Activated CD4-positive, alpha-beta T cell treated with anti-CD3 and anti-CD28 coated beads, Interleukin-2, amount 10 ng/mL, durations not matched to agents 24 days and 14 days (primary cell): ENCODE measurements at regions of chr10 and their contacts with region 1.

Region 1: GRCh38 chr10:28381903-28382347 is 79.1 kb upstream of the MPP7 start:
- DNase-seq: peak; percentile 94
- H3K4me3 Mint-ChIP-seq: no peak overlapping the region
- H3K27ac Mint-ChIP-seq: peak overlapping the region; percentile 36
- H3K4me1 Mint-ChIP-seq: peaks cover 25% of the 10 kb centered on the region
- H3K27me3 Mint-ChIP-seq: peaks cover 12% of the 10 kb centered on the region

Region 2: DNA sequence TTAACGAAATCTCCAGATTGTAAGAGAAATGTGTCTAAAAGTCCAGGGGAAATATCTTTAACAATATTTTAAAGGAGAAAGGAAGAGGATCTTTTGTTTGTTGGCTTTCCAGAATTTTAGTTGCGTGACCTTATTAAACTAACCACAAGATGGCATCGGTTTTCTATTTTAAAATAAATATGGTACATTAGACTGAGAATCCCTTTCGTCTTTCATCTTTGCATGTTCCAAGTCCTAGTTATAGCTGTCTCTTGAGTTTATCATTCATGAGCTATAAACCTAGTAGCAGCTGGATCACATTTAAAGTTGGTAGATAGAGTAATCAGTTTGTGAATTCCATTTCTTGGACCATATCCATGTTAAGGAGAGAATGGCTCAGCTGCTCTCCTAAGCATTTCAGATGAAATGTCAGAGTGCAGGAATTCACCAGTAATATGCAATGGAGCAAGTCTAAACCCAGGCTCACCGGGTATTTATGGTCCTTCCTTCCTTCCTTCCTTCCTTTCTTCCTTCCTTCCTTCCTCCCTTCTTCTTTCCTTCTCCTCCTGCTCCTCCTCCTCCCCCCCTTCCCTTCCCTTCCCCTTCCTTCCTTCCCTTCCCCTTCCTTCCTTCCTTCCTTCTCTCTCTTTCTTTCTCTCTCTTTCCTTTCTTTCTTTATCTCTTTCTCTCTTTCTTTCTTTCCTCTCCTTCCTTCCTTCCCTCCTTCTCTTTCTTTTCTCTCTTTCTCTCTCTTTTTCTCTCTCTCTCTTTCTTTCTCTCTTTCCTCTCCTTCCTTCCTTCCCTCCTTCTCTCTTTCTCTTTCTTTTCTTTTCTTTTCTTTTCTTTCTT is 935.6 kb before region 1 on chr10:
- intact Hi-C with region 1: loop called (anchors 10 kb)
- DNase-seq: no peak
- H3K4me3 Mint-ChIP-seq: no peak overlapping the region
- H3K27ac Mint-ChIP-seq: no peak overlapping the region
- H3K4me1 Mint-ChIP-seq: peaks cover 8% of the 10 kb centered on the region
- H3K27me3 Mint-ChIP-seq: peaks cover 14% of the 10 kb centered on the region

Region 3: GRCh38 chr10:28179006-28179742 is 202.8 kb before region 1 on chr10:
- intact Hi-C with region 1: loop called (anchors 5 kb)
- DNase-seq: peak; percentile 85
- H3K4me3 Mint-ChIP-seq: peak overlapping the region; percentile 76
- H3K27ac Mint-ChIP-seq: peak overlapping the region; percentile 85
- H3K4me1 Mint-ChIP-seq: peaks cover 23% of the 10 kb centered on the region
- H3K27me3 Mint-ChIP-seq: peaks cover 8% of the 10 kb centered on the region

Region 4: GRCh38 chr10:28250782-28251181 is 131.1 kb before region 1 on chr10:
- intact Hi-C with region 1: loop called (anchors 1 kb)
- DNase-seq: peak; percentile 41
- H3K4me3 Mint-ChIP-seq: no peak overlapping the region
- H3K27ac Mint-ChIP-seq: no peak overlapping the region
- H3K4me1 Mint-ChIP-seq: peaks cover 4% of the 10 kb centered on the region
- H3K27me3 Mint-ChIP-seq: peaks cover 4% of the 10 kb centered on the region

Region 5: GRCh38 chr10:28263136-28263820 is 118.6 kb before region 1 on chr10:
- intact Hi-C with region 1: no loop called
- DNase-seq: no peak
- H3K4me3 Mint-ChIP-seq: no peak overlapping the region
- H3K27ac Mint-ChIP-seq: no peak overlapping the region
- H3K4me1 Mint-ChIP-seq: peaks cover 7% of the 10 kb centered on the region
- H3K27me3 Mint-ChIP-seq: no peaks in the 10 kb centered on the region

Region 6: GRCh38 chr10:28302638-28303488 is 79.1 kb before region 1 on chr10 and contains the start of gene MPP7:
- intact Hi-C with region 1: loop called (anchors 1 kb)
- DNase-seq: peak; percentile 99
- H3K4me3 Mint-ChIP-seq: peak within 1 kb of the TSS; percentile 96
- H3K27ac Mint-ChIP-seq: peak within 1 kb of the TSS; percentile 82
- H3K4me1 Mint-ChIP-seq: peaks cover 29% of the 10 kb centered on the region
- H3K27me3 Mint-ChIP-seq: peaks cover 45% of the 10 kb centered on the region
- total RNA-seq, gene MPP7: 0.43 and 0.54 TPM in 2 replicates

Region 7: DNA sequence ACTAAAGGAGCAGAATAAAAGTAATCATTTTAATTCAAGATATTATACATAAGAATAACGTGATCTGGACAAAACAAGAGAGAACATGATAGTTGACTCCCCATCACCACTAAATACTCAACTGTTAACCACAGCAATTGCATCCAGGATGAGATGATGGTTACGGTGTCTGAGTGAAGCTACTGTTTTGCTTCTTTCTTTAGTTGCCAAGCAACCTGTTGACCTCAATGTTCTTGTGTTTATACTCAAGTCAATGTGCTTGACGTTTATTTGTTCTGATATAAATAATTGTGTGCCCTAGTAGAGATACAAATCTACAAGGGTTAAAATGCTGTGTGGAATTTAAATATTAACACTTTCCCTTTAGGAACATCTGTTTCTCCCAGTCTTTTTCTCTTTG is 47.6 kb before region 1 on chr10:
- intact Hi-C with region 1: loop called (anchors 1 kb)
- DNase-seq: peak; percentile 92
- H3K4me3 Mint-ChIP-seq: peak overlapping the region; percentile 91
- H3K27ac Mint-ChIP-seq: peak overlapping the region; percentile 100
- H3K4me1 Mint-ChIP-seq: peaks cover 46% of the 10 kb centered on the region
- H3K27me3 Mint-ChIP-seq: peaks cover 9% of the 10 kb centered on the region

Region 8: GRCh38 chr10:28367929-28368484 is 13.9 kb before region 1 on chr10:
- intact Hi-C with region 1: loop called (anchors 1 kb)
- DNase-seq: peak; percentile 91
- H3K4me3 Mint-ChIP-seq: peak overlapping the region; percentile 59
- H3K27ac Mint-ChIP-seq: peak overlapping the region; percentile 80
- H3K4me1 Mint-ChIP-seq: peaks cover 32% of the 10 kb centered on the region
- H3K27me3 Mint-ChIP-seq: no peaks in the 10 kb centered on the region

Region 9: GRCh38 chr10:29285624-29286051 is 903.7 kb after region 1 on chr10:
- intact Hi-C with region 1: no loop called
- DNase-seq: no peak
- H3K4me3 Mint-ChIP-seq: no peak overlapping the region
- H3K27ac Mint-ChIP-seq: no peak overlapping the region
- H3K4me1 Mint-ChIP-seq: no peaks in the 10 kb centered on the region
- H3K27me3 Mint-ChIP-seq: peaks cover under 1% of the 10 kb centered on the region